ENCODE measurements at regions of chr2 and their contacts with region 1.

Region 1: GRCh38 chr2:109690822-109691547 is 76.8 kb downstream of the SOWAHC start:
- DNase-seq: peak; percentile 14 to 81
- H3K4me3 ChIP-seq: peak overlapping the region in 1 of 2 donors; percentile 24
- H3K27ac ChIP-seq: peak overlapping the region; percentile 78 to 79
- H3K4me1 ChIP-seq: peaks cover 19 to 28% of the 10 kb centered on the region in 2 donors
- H3K27me3 ChIP-seq: no peaks in the 10 kb centered on the region
- CTCF ChIP-seq: no peak

Region 2: GRCh38 chr2:109647636-109648035 is 43.3 kb before region 1 on chr2:
- intact Hi-C with region 1: loop called (anchors 2 kb)
- DNase-seq: peak; percentile 16 to 90
- H3K4me3 ChIP-seq: peak overlapping the region in 1 of 2 donors; percentile 49
- H3K27ac ChIP-seq: peak overlapping the region; percentile 73 to 87
- H3K4me1 ChIP-seq: peaks cover 4 to 23% of the 10 kb centered on the region in 2 donors
- H3K27me3 ChIP-seq: no peaks in the 10 kb centered on the region
- CTCF ChIP-seq: no peak

Measured in ascending aorta (tissue), 2 donors.